ENCODE measurements at regions of chr16 and their contacts with region 1.

Region 1: GRCh38 chr16:14285513-14286385 is 214.6 kb downstream of the MRTFB start:
- DNase-seq: peak; percentile 99
- H3K4me3 Mint-ChIP-seq: peak overlapping the region; percentile 88
- H3K27ac Mint-ChIP-seq: peak overlapping the region; percentile 80
- H3K4me1 Mint-ChIP-seq: peaks cover 15% of the 10 kb centered on the region
- H3K27me3 Mint-ChIP-seq: peaks cover 2% of the 10 kb centered on the region

Region 2: DNA sequence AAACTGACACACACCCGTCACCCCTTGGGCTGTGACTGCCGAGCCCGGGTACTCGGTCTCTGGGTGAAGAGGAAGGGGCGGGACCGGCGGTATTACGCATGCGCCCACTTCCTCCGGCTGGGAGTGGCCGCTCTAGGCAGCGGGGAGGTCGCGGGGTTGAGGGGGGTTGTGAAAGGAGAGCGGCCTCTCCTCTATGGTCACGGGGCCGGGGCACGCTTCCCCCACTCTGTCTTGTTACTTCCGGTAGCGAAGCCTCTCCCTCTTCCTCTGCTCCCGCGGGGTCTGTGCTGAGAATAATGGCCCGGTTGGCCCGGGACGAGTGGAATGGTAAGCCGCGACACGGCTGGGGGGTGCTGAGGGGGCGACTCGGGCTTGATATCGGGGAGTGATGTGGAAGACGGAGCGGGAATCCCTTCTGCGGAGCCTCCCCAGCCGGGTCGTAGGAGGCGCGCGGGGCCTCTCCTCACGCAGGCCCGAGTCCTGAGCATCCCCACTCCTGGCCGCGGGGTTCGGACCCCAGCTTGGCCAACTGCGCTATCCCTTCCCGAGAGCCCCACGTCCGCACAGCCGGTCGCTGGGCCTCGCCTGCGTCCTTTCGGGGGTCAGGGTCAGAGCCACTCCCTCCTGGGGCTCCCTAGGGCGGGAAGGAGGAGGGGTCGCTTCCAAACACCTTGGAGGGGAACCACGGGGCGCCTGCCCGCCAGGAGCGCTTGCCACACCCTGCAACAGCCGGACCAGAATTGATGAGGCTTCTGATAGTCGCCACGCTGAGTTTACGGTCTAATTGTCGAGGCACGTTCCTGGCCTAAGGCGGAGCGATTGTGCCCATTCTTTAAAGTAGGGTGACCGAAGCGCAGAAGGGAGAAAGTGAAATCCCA is 347.2 kb after region 1 on chr16 and contains the start of gene BFAR:
- intact Hi-C with region 1: loop called (anchors 1 kb)
- DNase-seq: peak; percentile 100
- H3K4me3 Mint-ChIP-seq: peak within 1 kb of the TSS; percentile 100
- H3K27ac Mint-ChIP-seq: peak within 1 kb of the TSS; percentile 100
- H3K4me1 Mint-ChIP-seq: peaks cover 46% of the 10 kb centered on the region
- H3K27me3 Mint-ChIP-seq: no peaks in the 10 kb centered on the region
- total RNA-seq, gene BFAR: 59.3 and 63.4 TPM in 2 replicates

Measured in activated CD4-positive, alpha-beta T cell treated with anti-CD3 and anti-CD28 coated beads, Interleukin-2, amount 10 ng/mL, durations not matched to agents 24 days and 14 days (primary cell).